HCT116 (cell line): ENCODE measurements at regions of chr4 and their contacts with region 1.

Region 1: GRCh38 chr4:185304944-185305690 is 90.6 kb downstream of the LRP2BP start:
- DNase-seq: no peak
- ATAC-seq: peak; percentile 77
- H3K4me3 ChIP-seq: 0 out of 4 replicates have a peak overlapping the region, but pooled peaks of 1 of the 2 experiments have one; percentile 0
- H3K27ac ChIP-seq: peak overlapping the region; percentile 52; the same call in 1 of the 2 replicates
- H3K4me1 ChIP-seq: peaks cover 43 to 69% of the 10 kb centered on the region in 2 experiments
- H3K27me3 ChIP-seq: no peaks in the 10 kb centered on the region
- CTCF ChIP-seq: peak; percentile 27 to 69 (median 64); a peak in 5 of 6 replicates
- POLR2A ChIP-seq: no peak
- RAD21 ChIP-seq: peak; percentile 81

Region 2: DNA sequence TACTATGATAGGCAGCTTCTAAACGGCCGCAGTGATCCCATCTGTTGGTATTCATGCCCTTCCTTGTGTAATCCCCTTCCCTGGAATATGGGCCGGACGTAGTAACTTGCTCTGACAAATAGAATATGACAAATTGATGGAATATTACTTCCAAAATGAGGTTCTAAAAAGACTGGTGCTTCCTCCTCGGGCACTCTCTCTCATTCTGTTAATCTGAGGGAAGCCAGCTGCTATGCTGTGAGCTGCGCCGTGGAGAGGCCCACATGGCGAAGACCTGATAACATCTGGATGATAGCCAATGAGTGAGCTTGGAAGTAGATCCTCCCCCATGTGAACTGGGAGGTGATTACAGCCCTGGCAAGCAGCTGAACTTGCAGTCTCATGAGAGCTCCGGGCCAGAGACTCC is 189.3 kb before region 1 on chr4:
- CTCF ChIA-PET with region 1: no interaction called
- POLR2A ChIA-PET with region 1: no interaction called
- RAD21 ChIA-PET with region 1: no interaction called
- intact Hi-C with region 1: loop called (anchors 10 kb)
- DNase-seq: no peak
- ATAC-seq: no peak
- H3K4me3 ChIP-seq: no peak overlapping the region
- H3K27ac ChIP-seq: no peak overlapping the region
- H3K4me1 ChIP-seq: peaks cover 27 to 51% of the 10 kb centered on the region in 2 experiments
- H3K27me3 ChIP-seq: no peaks in the 10 kb centered on the region
- CTCF ChIP-seq: no peak
- POLR2A ChIP-seq: no peak
- RAD21 ChIP-seq: no peak

Region 3: GRCh38 chr4:185203486-185204237 is 101.5 kb before region 1 on chr4 and contains the start of gene CFAP97:
- CTCF ChIA-PET with region 1: no interaction called
- POLR2A ChIA-PET with region 1: no interaction called
- RAD21 ChIA-PET with region 1: no interaction called
- intact Hi-C with region 1: loop called (anchors 2 kb)
- DNase-seq: peak; percentile 53
- ATAC-seq: peak; percentile 85
- H3K4me3 ChIP-seq: peak within 1 kb of the TSS; percentile 63 to 64
- H3K27ac ChIP-seq: peak within 1 kb of the TSS; percentile 95
- H3K4me1 ChIP-seq: peaks cover 38 to 49% of the 10 kb centered on the region in 2 experiments
- H3K27me3 ChIP-seq: no peaks in the 10 kb centered on the region
- CTCF ChIP-seq: no peak
- POLR2A ChIP-seq: peak; percentile 78
- RAD21 ChIP-seq: no peak
- total RNA-seq, gene CFAP97: 57.7 TPM

Region 4: DNA sequence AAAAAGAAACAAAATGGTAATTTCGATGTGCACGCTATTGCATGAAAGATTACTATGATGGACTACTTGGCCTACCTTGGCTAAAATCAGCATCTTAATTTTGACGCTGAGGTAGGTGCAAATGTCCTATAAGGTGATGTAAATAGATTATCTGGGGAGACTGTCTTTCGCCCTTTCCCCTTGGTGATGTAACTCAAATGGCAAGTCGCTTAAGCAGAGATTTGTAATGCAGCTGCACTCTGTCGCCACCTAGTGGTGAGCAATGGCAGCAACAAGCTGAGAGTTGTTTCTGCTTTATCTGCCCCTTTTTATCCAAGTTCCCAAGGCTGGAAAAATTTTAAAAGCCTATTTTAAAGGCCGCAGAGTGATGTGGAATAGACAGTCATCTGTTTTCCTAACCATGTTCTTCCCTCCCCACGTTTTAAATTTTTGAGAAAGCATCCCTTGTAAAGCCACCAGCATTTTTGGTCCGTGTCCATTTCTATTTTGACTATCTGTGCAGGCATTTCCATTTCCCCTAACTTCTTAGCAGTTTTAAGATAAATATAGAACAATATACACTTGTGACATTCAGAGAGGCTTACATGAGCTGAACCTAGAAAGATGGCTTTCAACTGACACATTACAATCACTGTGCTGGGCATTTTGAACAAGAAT is 292.5 kb after region 1 on chr4:
- CTCF ChIA-PET with region 1: no interaction called
- POLR2A ChIA-PET with region 1: no interaction called
- RAD21 ChIA-PET with region 1: no interaction called
- intact Hi-C with region 1: no loop called
- DNase-seq: peak; percentile 66
- ATAC-seq: peak; percentile 88
- H3K4me3 ChIP-seq: no peak overlapping the region
- H3K27ac ChIP-seq: no peak overlapping the region
- H3K4me1 ChIP-seq: no peaks in the 10 kb centered on the region
- H3K27me3 ChIP-seq: no peaks in the 10 kb centered on the region
- CTCF ChIP-seq: peak; percentile 89 to 98 (median 98)
- POLR2A ChIP-seq: no peak
- RAD21 ChIP-seq: peak; percentile 97